Activated CD4-positive, alpha-beta T cell treated with anti-CD3 and anti-CD28 coated beads, Interleukin-2, amount 10 ng/mL, durations not matched to agents 24 days and 14 days (primary cell): ENCODE measurements at regions of chr10 and their contacts with region 1.

Region 1: DNA sequence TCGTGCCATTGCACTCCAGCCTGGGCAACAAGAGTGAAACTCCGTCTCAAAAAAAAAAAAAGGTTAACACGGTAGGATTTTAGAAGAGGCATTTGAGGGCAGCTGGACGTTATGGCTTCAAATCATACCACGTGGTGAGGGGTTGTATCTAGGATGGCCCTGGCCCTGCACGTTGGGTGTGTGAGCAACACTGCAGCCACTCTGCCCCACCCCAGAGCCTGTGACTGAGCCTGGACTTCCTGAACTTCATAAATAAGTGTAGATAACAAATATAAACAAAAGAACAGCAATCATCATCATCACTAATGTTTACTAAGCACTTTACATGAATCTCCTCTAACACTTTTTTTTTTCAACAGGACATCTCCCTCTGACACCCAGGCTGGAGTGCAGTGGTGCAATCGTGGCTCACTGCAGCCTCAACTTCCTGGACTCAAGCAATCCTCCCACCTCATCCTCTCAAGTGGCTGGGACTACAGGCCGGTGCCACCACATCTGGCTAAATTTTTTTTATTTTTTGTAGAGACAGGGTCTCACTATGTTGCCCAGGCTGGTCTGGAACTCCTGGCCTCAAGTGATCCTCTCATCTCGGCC is 169.5 kb upstream of the FRMD4A start:
- DNase-seq: no peak
- H3K4me3 Mint-ChIP-seq: no peak overlapping the region
- H3K27ac Mint-ChIP-seq: no peak overlapping the region
- H3K4me1 Mint-ChIP-seq: peaks cover 8% of the 10 kb centered on the region
- H3K27me3 Mint-ChIP-seq: peaks cover 15% of the 10 kb centered on the region

Region 2: DNA sequence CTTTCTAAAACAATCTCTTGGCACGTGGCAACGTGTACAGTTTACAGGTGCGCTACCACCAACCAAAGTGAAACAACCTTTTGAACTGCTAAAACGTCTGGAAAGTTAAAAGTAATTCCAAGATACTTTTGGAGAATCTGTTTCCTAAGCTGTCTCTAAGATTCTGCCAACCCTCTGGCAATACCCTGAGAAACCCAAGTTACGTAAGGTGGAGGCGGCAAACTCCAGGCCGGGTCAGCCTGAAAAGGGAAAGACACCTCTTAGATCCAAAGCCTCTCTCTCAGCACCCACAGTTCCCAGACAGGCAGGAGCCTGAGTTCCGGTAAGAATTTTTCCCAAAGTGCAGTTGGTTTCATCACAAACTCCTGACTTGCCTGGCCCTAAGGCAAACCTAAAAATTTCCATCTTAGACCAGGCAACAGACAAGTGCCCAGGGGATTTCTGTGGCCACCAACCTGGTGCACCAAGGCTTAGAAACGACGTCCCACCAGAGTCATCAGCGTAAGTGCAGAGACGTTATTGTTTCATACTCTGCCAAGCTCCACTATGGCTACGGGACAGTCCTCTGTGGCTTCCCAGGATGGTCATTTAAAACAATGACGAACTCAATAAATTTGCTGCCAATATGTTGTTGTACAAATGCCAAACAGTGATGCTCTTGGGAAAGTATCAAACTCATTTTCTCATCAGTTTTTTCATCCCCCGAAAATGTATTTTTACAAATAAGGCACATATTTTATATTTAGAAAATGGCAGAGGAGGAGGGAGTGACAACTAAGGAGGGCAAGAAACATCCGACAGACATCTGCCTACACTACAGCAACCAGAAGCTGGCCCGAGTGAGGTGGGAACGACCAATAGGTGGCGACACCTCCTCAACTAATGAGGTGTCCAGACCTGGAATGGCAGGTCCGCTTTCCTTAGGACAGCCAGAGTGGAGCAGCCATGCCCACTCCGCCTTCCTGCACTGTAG is 36.3 kb after region 1 on chr10:
- intact Hi-C with region 1: loop called (anchors 5 kb)
- DNase-seq: peak; percentile 83
- H3K4me3 Mint-ChIP-seq: no peak overlapping the region
- H3K27ac Mint-ChIP-seq: peak overlapping the region; percentile 15
- H3K4me1 Mint-ChIP-seq: peaks cover 66% of the 10 kb centered on the region
- H3K27me3 Mint-ChIP-seq: no peaks in the 10 kb centered on the region

Region 3: DNA sequence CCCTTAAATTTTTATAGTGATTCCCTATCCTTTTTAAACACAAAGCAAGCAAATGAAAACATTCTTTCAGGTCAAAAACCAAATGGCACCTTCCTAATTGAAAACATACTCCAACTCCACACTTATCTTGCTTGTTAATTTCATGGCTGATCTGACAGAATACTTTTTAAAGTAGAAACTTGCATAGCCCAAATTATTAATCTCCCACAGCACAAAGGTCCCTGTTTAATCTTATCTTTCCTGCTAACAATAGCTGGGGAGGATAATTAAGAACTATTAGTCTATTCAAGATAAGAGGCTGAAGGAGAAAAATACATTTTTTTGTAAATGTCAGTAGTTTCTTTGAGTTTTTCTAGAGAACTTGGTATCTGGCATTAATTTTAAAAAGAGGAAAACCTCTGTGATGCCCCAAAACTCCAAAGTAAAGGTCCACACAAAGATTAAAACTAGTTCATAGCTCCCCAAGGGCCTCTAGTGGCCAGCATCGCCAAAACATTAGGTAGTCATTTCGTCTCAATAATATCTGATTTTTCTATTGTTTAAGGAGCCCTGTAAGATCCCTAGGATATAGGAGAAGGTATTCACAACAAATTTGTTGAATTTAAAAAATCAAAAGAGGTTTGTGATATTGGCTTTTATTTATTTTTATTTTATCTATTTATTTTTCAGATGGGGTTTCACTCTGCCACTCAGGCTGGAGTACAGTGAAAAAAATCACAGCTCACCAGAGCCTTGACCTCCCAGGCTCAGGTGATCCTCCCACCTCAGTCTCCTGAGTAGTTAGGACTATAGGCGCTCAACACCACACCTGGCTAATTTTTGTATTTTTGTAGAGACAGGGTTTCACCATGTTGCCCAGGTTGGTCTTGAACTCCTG is 322.8 kb after region 1 on chr10:
- intact Hi-C with region 1: loop called (anchors 1 kb)
- DNase-seq: peak; percentile 79
- H3K4me3 Mint-ChIP-seq: no peak overlapping the region
- H3K27ac Mint-ChIP-seq: no peak overlapping the region
- H3K4me1 Mint-ChIP-seq: peaks cover 12% of the 10 kb centered on the region
- H3K27me3 Mint-ChIP-seq: peaks cover 12% of the 10 kb centered on the region

Region 4: DNA sequence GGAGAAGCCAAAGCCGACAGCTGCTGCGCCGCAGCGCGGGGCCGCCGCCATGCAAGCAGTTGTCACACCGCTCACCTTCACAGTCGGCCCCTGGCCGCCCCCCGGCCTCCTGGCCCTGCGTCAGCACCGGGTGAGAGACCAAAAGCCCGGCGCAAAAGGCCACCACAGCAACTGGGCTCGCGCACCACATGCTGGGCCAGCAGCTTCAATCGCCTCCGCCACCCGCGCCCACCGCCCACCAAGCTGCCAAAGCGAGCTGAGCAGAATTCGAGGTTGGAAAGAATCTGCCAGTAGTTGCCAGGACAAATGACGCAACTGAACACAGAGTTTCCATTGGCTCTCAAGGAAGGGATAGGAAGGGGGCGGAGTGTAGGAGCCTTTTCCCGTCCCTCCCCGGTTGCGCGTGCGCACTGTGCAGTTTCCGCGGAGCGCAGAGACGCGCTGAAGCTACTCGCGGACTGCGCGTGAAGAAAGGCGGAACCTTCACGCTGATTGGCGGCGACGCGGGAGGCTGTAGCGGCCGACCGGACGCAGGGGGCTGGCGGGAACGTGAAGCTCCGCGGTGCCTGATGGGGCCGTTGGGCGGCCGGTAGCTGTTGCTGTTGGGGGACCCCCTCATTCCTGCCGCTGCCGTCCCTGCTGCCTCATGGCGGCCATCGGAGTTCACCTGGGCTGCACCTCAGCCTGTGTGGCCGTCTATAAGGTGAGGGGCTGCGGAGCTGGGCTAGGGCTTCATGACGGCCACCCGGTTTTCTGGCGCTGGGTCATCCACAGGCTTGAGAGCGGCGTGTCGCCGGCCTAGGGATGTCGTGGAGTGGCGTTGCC is 337.7 kb after region 1 on chr10 and contains the starts of genes CDNF, HSPA14 and MSANTD7:
- intact Hi-C with region 1: loop called (anchors 2 kb)
- DNase-seq: peak; percentile 100
- H3K4me3 Mint-ChIP-seq: peak within 1 kb of the TSS; percentile 92
- H3K27ac Mint-ChIP-seq: peak within 1 kb of the TSS; percentile 96
- H3K4me1 Mint-ChIP-seq: peaks cover 18% of the 10 kb centered on the region
- H3K27me3 Mint-ChIP-seq: no peaks in the 10 kb centered on the region
- total RNA-seq, gene CDNF: 0.62 and 0.70 TPM in 2 replicates
- total RNA-seq, gene HSPA14: 42.0 and 44.1 TPM in 2 replicates
- total RNA-seq, gene MSANTD7: 28.9 and 30.3 TPM in 2 replicates

Region 5: DNA sequence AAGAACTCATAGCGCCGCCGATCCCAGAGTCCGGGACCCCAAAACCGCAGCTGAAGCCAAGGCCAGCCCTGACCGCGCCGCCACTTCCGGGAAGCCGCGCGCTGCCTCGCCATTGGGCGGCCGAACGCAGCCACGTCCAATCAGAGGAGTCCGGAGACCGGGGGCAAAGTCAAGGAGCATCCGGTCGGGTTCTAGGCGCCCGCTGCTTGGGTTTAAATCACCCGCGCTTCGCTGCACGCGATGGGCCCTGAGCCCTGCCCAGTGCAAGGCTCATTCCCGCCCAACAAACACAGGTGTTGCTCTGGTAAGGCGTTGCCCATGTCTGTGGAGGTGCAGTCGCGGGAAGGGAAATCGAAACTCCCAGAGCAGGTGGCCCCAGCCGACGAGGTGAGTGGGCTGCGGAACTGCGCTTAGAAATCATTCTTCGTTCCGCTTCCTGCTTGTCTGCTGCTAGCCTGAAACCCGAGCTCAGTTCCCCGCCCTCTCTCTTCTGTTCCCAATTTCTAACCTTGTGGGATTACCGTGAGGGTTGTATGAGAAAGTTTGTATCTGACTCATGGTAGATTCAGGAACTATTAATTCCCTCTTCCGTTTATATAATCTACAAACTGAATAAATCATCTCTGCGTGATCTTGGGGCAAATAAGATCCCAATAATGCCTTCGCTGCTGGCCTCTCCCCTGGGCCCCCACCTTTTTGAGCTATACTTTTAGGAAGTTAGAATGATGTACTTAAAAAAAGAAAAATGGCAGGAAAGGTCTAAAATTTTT is 453.9 kb after region 1 on chr10 and contains the start of gene DCLRE1C:
- intact Hi-C with region 1: loop called (anchors 5 kb)
- DNase-seq: peak; percentile 97
- H3K4me3 Mint-ChIP-seq: peak within 1 kb of the TSS; percentile 96
- H3K27ac Mint-ChIP-seq: peak within 1 kb of the TSS; percentile 97
- H3K4me1 Mint-ChIP-seq: peaks cover 45% of the 10 kb centered on the region
- H3K27me3 Mint-ChIP-seq: no peaks in the 10 kb centered on the region
- total RNA-seq, gene DCLRE1C: 17.5 and 21.0 TPM in 2 replicates

Region 6: GRCh38 chr10:14971867-14972448 is 471.7 kb after region 1 on chr10:
- intact Hi-C with region 1: loop called (anchors 5 kb)
- DNase-seq: peak; percentile 85
- H3K4me3 Mint-ChIP-seq: no peak overlapping the region
- H3K27ac Mint-ChIP-seq: no peak overlapping the region
- H3K4me1 Mint-ChIP-seq: peaks cover 9% of the 10 kb centered on the region
- H3K27me3 Mint-ChIP-seq: peaks cover 18% of the 10 kb centered on the region

Region 7: DNA sequence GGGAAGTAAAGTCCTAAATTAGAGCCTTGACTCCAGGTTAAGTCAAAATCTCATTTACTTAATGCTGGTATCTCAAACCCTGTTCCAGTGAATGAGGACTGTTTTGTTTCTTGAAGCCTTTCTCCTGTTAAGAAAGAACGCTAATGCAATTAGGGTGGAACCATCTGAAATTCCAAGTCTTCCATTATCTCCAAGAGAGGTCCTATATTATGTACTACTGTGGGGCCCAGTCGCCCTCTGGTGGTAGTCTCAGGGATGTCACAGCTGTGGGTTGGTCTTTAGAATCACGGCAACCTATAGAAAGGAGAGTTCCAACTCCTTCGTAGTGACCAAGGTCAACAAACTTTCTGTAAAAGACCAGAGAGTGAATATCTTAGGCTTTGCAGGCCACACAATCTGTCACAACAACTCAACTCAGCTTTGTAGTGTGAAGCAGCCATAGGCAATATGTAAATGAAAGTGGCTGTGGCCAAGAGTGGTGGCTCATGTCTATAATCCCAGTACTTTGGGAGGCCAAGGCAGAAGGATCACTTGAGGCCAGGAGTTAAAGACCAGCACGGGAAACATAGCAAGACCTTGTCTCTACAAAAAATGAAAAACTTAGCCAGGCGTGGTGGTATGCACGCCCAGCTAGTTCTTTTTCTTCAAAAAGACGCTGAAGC is 606.2 kb after region 1 on chr10:
- intact Hi-C with region 1: loop called (anchors 2 kb)
- DNase-seq: peak; percentile 90
- H3K4me3 Mint-ChIP-seq: no peak overlapping the region
- H3K27ac Mint-ChIP-seq: peak overlapping the region; percentile 20
- H3K4me1 Mint-ChIP-seq: peaks cover 6% of the 10 kb centered on the region
- H3K27me3 Mint-ChIP-seq: no peaks in the 10 kb centered on the region